ENCODE measurements at regions of chr11 and their contacts with region 1.

Region 1: GRCh38 chr11:62108017-62108750 is 15.6 kb upstream of the INCENP start:
- DNase-seq: peak; percentile 80
- ATAC-seq: peak; percentile 63
- H3K4me3 ChIP-seq: no peak overlapping the region
- H3K4me3 Mint-ChIP-seq: no peak overlapping the region
- H3K27ac ChIP-seq: no peak overlapping the region
- H3K27ac Mint-ChIP-seq: no peak overlapping the region
- H3K4me1 ChIP-seq: peaks cover 0 to 12% of the 10 kb centered on the region in 2 donors
- H3K4me1 Mint-ChIP-seq: peaks cover 9% of the 10 kb centered on the region
- H3K27me3 ChIP-seq: peaks cover 0 to 3% (median under 1%) of the 10 kb centered on the region in 4 experiments
- H3K27me3 Mint-ChIP-seq: no peaks in the 10 kb centered on the region
- CTCF ChIP-seq: peak; percentile 83

Region 2: DNA sequence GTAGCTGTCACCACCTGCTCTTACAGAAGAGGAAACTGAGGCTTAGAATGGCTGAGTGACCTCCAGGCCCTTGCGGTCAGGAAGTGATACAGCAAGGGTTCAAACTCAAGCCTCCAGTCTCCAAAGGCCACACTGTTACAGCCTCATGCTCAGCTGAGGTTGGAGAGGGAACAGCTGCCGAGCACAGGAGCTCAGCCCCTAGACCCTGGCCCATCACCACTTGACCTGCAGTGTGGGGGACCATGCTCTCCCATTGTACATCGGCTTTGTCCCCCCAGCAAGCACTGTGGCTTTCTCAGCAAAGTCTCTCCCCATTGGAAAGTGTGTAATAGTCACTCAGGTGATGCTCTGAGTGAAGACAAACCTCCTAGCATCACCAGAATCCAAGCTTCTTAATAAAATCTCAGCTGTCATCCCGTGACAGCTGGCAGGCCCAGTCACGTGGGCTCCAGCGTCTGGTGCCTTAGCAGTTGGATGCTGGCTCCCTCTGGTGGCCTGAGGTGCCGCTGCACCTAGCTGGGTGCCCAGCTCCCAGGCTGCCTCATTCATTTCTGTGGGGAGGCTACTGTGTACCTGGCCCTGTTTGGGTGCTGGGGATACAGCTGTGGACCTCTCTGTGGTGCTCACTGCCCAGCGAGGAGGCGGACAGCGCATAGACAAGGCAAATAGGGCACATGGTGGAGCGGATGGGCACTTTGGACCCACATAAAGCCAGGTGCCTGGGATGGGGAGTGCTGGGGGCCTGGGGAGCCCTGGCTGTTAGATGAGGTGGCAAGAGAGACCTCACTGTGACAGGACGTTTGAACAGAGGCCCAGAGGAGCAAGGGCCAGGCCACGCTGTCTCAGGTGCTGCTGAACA is 374.8 kb before region 1 on chr11:
- CTCF ChIA-PET with region 1: interaction called, 11 read pairs
- POLR2A ChIA-PET with region 1: no interaction called
- intact Hi-C with region 1: no loop called
- DNase-seq: peak; percentile 86
- ATAC-seq: peak; percentile 91
- H3K4me3 ChIP-seq: no peak overlapping the region
- H3K4me3 Mint-ChIP-seq: no peak overlapping the region
- H3K27ac ChIP-seq: no peak overlapping the region
- H3K27ac Mint-ChIP-seq: no peak overlapping the region
- H3K4me1 ChIP-seq: peaks cover 0 to 8% of the 10 kb centered on the region in 2 donors
- H3K4me1 Mint-ChIP-seq: peaks cover 2% of the 10 kb centered on the region
- H3K27me3 ChIP-seq: no peaks in the 10 kb centered on the region
- H3K27me3 Mint-ChIP-seq: peaks cover 1% of the 10 kb centered on the region
- CTCF ChIP-seq: peak; percentile 94

Region 3: DNA sequence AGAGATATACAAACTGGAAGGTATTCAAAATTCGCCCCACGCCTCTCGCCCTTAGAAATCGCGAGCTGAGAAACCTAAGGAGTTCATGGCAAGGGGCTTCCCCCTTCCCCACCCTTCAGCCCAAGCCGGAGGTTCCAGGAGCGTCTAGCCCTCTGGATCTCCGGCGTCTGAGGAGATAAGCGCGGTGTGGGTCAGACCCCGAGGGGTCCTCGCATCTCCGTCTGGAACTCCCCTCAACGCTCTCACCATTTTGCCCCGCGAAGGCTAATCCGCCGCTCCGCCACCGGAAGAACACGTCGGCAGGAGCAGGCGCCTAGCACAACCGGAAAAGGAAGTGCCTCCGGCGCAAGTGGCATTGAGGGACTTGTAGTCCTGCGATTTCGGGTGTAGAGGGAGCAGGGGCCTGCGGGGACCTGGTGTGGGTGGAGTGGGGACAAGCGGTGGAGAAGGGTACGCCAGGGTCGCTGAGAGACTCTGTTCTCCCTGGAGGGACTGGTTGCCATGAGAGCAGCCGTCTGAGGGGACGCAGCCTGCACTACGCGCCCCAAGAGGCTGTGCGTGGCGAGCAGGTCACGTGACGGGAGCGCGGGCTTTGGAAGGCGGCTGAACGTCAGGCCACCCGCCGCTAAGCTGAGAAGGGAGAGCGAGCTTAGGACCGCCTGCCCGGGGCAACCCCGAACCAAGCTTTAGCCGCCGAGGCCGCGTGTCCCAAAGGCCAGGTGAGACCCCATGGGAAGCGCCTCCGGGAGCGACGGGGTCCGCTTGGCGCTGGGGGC is 315.7 kb before region 1 on chr11 and contains the starts of genes FEN1 and TMEM258:
- CTCF ChIA-PET with region 1: interaction called, 222 read pairs
- POLR2A ChIA-PET with region 1: no interaction called
- intact Hi-C with region 1: loop called (anchors 1 kb)
- DNase-seq: peak; percentile 96
- ATAC-seq: peak; percentile 91
- H3K4me3 ChIP-seq: peak within 1 kb of the TSS; percentile 80 to 94 (median 88)
- H3K4me3 Mint-ChIP-seq: peak within 1 kb of the TSS; percentile 93
- H3K27ac ChIP-seq: peak within 1 kb of the TSS; percentile 92 to 96
- H3K27ac Mint-ChIP-seq: peak within 1 kb of the TSS; percentile 97
- H3K4me1 ChIP-seq: peaks cover 11 to 23% of the 10 kb centered on the region in 2 donors
- H3K4me1 Mint-ChIP-seq: peaks cover 34% of the 10 kb centered on the region
- H3K27me3 ChIP-seq: no peaks in the 10 kb centered on the region
- H3K27me3 Mint-ChIP-seq: no peaks in the 10 kb centered on the region
- CTCF ChIP-seq: no peak
- total RNA-seq, gene FEN1: 9.2 and 9.8 TPM in 2 replicates
- total RNA-seq, gene TMEM258: 64.6 and 65.8 TPM in 2 replicates

Region 4: DNA sequence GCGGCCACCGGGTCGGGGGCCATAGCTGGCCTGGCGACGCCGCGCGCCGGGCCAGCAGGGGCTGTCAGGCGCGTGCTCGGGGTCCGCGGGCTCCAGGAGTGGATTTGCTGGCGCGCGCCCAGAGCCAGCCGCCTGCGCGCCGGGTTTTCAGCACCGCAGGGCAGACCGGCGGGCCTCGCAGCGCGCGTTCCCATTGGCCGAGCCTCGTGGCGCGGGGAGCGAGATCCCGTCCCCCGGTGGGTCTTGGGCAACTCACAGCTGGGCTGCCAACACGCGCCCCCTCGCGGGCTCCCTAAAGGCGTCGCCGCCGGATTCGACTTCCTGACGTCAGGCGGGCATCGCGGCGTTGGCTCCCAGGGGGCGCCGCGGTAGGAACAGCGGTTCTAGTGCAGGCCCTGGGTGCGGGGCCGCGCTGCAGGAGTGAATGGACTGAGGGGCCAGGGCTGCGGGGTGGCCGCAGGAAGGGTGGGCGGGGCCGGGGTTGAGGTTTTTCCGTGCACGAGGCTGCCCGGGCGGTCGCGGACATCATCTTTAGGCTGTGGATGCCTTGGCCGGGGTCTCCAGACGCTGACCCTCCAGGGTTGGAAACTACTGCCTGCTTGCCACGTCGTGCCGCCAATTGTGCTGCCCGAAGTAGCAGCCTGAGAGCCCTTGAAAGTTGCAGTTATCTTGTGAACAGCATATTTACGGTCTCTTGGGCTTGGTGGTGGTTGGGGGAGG is 291.3 kb before region 1 on chr11 and contains the start of gene FADS1:
- CTCF ChIA-PET with region 1: interaction called, 13 read pairs
- POLR2A ChIA-PET with region 1: no interaction called
- intact Hi-C with region 1: no loop called
- DNase-seq: peak; percentile 83
- ATAC-seq: peak; percentile 65
- H3K4me3 ChIP-seq: peak within 1 kb of the TSS; percentile 56 to 77 (median 70)
- H3K4me3 Mint-ChIP-seq: peak within 1 kb of the TSS; percentile 96
- H3K27ac ChIP-seq: no peak within 1 kb of the TSS
- H3K27ac Mint-ChIP-seq: peak within 1 kb of the TSS; percentile 83
- H3K4me1 ChIP-seq: peaks cover 9 to 24% of the 10 kb centered on the region in 2 donors
- H3K4me1 Mint-ChIP-seq: peaks cover 15% of the 10 kb centered on the region
- H3K27me3 ChIP-seq: peaks cover 0 to 17% (median 4%) of the 10 kb centered on the region in 4 experiments
- H3K27me3 Mint-ChIP-seq: no peaks in the 10 kb centered on the region
- CTCF ChIP-seq: peak; percentile 53
- total RNA-seq, gene FADS1: 14.8 and 15.6 TPM in 2 replicates

Region 5: DNA sequence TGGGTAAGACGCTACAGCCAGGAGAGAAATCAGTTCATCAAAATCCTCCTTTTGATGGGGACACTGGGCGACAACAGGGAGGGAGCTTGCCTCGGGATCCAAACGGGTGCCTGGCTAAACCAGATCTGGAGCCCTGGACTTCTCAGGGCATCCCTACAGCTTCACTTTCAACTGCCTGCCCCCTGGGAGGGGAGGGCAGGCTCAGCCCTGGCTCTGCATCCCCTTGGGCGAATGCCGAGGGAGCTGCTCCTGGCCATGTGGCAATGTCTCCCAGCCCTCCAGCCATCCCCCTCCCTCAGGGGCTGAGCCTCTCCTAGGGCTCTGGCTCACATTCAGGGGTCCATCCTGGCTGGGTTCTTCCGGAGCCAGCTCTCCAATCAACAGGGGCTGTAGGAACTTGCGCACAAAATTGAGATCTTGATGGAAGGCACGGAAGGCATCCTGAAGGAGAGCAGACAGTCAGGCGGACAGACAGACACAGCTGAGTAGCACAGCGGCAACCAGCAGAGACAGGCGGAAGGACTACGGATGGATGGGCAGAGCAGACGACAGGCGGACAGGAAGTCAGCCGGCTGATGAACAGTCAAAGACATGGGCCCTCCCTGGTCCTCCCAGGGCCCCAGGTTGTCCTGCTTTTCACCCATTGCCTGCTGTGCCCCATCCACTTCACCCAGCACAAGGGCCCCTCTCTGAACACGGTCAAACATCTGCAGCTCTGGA is 228.3 kb before region 1 on chr11:
- CTCF ChIA-PET with region 1: interaction called, 114 read pairs
- POLR2A ChIA-PET with region 1: no interaction called
- intact Hi-C with region 1: no loop called
- DNase-seq: peak; percentile 64
- ATAC-seq: peak; percentile 67
- H3K4me3 ChIP-seq: peak overlapping the region; percentile 2 to 63 (median 39)
- H3K4me3 Mint-ChIP-seq: peak overlapping the region; percentile 95
- H3K27ac ChIP-seq: peak overlapping the region; percentile 67 to 84
- H3K27ac Mint-ChIP-seq: peak overlapping the region; percentile 95
- H3K4me1 ChIP-seq: peaks cover 29 to 53% of the 10 kb centered on the region in 2 donors
- H3K4me1 Mint-ChIP-seq: peaks cover 54% of the 10 kb centered on the region
- H3K27me3 ChIP-seq: no peaks in the 10 kb centered on the region
- H3K27me3 Mint-ChIP-seq: no peaks in the 10 kb centered on the region
- CTCF ChIP-seq: no peak

Region 6: DNA sequence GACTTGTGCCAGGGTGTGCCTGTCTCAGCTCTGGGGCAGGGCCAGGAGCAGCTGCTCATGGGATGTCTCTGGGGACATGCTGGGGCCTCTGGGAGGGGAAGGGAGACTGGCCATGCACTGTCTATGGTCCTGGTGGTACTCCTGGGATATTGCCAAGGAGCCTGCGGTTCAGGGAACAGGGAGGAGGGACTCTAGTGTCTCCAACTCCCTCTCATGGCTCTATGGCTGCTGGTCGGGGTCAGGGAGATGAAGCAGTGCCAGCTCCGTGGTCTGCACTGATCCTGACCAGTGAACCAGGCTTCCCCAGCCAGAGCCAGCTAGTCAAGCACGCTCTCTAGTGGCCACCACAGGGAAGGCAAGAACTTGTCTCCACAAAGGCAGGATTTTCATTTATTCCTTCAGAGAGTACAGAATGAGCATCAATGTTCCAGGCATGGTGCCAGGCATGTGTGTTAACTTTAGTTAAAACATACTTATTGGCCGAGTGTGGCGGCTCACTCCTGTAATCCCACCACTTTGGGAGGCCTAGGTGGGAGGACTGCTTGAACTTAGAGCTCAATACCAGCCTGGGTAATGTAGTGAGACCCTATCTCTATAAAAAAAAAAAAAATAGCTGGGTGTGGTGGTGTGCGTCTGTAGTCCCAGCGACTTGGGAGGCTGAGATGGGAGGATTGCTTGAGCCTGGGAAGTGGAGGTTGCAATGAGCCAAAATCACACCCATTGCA is 160.5 kb before region 1 on chr11:
- CTCF ChIA-PET with region 1: interaction called, 48 read pairs
- POLR2A ChIA-PET with region 1: no interaction called
- intact Hi-C with region 1: no loop called
- DNase-seq: peak; percentile 82
- ATAC-seq: peak; percentile 90
- H3K4me3 ChIP-seq: no peak overlapping the region
- H3K4me3 Mint-ChIP-seq: no peak overlapping the region
- H3K27ac ChIP-seq: no peak overlapping the region
- H3K27ac Mint-ChIP-seq: peak overlapping the region; percentile 3
- H3K4me1 ChIP-seq: peaks cover 7 to 9% of the 10 kb centered on the region in 2 donors
- H3K4me1 Mint-ChIP-seq: peaks cover 8% of the 10 kb centered on the region
- H3K27me3 ChIP-seq: no peaks in the 10 kb centered on the region
- H3K27me3 Mint-ChIP-seq: peaks cover 4% of the 10 kb centered on the region
- CTCF ChIP-seq: peak; percentile 90

Region 7: GRCh38 chr11:62030071-62030684 is 78.0 kb before region 1 on chr11:
- CTCF ChIA-PET with region 1: no interaction called
- POLR2A ChIA-PET with region 1: no interaction called
- intact Hi-C with region 1: no loop called
- DNase-seq: no peak
- ATAC-seq: no peak
- H3K4me3 ChIP-seq: no peak overlapping the region
- H3K4me3 Mint-ChIP-seq: no peak overlapping the region
- H3K27ac ChIP-seq: no peak overlapping the region
- H3K27ac Mint-ChIP-seq: no peak overlapping the region
- H3K4me1 ChIP-seq: peaks cover 14 to 22% of the 10 kb centered on the region in 2 donors
- H3K4me1 Mint-ChIP-seq: peaks cover 25% of the 10 kb centered on the region
- H3K27me3 ChIP-seq: peaks cover 0 to 4% (median 0%) of the 10 kb centered on the region in 4 experiments
- H3K27me3 Mint-ChIP-seq: peaks cover 3% of the 10 kb centered on the region
- CTCF ChIP-seq: no peak

Region 8: GRCh38 chr11:62088331-62088933 is 19.8 kb before region 1 on chr11:
- CTCF ChIA-PET with region 1: interaction called, 104 read pairs
- POLR2A ChIA-PET with region 1: no interaction called
- intact Hi-C with region 1: no loop called
- DNase-seq: no peak
- ATAC-seq: no peak
- H3K4me3 ChIP-seq: no peak overlapping the region
- H3K4me3 Mint-ChIP-seq: no peak overlapping the region
- H3K27ac ChIP-seq: no peak overlapping the region
- H3K27ac Mint-ChIP-seq: no peak overlapping the region
- H3K4me1 ChIP-seq: no peaks in the 10 kb centered on the region
- H3K4me1 Mint-ChIP-seq: no peaks in the 10 kb centered on the region
- H3K27me3 ChIP-seq: peaks cover 0 to 5% (median 1%) of the 10 kb centered on the region in 4 experiments
- H3K27me3 Mint-ChIP-seq: peaks cover 5% of the 10 kb centered on the region
- CTCF ChIP-seq: no peak